CD8-positive, alpha-beta T cell (primary cell): ENCODE measurements at regions of chr16 and their contacts with region 1.

Region 1: DNA sequence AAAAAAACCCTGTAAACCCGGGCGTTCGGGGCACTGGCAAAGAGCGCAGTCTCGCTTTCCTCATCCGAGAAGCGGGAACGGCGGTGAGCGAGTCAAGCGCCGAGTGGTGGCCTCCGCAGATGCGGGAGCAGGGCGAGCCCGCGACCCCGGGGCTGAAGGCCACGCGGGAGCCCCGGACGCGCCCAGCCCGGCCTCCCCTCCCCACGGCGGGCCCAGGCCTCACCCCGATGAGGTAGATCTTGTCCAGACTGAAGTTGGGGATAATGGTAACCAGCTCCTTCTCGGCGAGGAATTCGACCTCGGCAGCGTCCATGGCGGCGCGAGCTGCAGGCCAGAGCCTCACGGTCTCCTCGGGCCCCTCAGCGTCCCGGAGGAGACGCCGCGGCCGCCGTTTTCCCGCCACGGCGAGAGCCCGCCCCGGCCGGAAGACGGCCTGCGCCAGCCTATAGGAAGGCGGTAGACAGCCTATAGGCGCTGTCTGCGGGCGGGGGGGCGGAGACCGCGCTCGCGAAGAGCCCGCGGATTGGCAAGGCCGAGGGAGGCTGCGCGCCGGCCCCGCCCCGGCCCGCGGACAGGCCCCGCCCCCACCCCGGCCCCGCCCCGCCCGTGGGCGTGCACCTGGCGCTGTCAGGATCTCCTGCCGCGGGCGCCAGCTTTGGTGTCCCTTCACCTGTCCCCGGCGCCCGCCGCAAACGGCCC is at the start of gene GINS2:
- DNase-seq: peak; percentile 84 to 95 (median 89)
- ATAC-seq: peak; percentile 100
- H3K4me3 ChIP-seq: peak within 1 kb of the TSS; percentile 51 to 88
- H3K4me3 Mint-ChIP-seq: peak within 1 kb of the TSS; percentile 75
- H3K27ac ChIP-seq: no peak within 1 kb of the TSS
- H3K27ac Mint-ChIP-seq: no peak within 1 kb of the TSS
- H3K4me1 ChIP-seq: peaks cover 7% of the 10 kb centered on the region
- H3K4me1 Mint-ChIP-seq: peaks cover 2% of the 10 kb centered on the region
- H3K27me3 ChIP-seq: no peaks in the 10 kb centered on the region
- H3K27me3 Mint-ChIP-seq: peaks cover 5% of the 10 kb centered on the region
- CTCF ChIP-seq: no peak
- total RNA-seq, gene GINS2: 0.58 to 1.0 TPM

Region 2: DNA sequence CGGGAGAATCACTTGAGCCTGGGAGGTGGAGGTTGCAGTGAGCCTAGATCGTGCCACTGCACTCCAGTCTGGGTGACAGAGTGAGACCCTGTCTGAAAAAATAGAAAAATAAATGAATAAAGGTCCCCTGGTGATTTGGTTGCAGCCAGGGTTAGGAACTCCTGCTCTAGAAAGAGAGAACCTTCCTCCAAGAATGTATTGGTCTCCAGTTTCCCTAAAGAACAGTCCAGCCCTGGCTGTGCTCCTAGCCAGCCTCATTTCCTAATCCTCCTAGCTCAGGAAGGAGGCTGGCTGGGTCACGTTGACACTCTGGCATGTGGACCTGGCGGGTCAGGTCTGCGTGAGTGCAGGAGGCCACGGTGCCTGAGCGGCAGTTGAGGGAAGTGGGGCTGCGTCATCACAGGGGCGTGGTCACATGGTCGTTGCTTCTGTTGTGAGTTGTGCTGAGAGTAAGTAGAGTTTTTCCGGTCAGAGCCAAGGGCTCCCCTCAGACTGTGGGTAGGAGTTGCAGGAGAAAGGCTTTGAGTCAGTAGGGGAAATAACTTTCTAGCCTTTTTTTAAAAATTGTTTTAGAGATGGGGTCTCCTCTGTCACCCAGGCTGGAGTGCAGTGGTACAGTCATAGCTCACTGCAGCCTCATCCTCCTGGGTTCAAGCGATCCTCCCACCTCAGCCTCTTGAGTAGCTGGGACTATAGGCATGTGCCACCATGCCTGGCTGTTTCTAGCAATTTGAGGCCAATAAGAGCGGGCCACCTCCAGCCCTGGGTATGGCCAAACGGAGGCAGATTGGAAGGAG is 382.5 kb before region 1 on chr16:
- CTCF ChIA-PET with region 1: no interaction called
- POLR2A ChIA-PET with region 1: no interaction called
- intact Hi-C with region 1: no loop called
- DNase-seq: peak; percentile 54 to 89 (median 82)
- ATAC-seq: peak; percentile 87
- H3K4me3 ChIP-seq: no peak overlapping the region
- H3K4me3 Mint-ChIP-seq: peak overlapping the region; percentile 44
- H3K27ac ChIP-seq: peak overlapping the region in 1 of 2 experiments; percentile 31
- H3K27ac Mint-ChIP-seq: peak overlapping the region; percentile 95
- H3K4me1 ChIP-seq: peaks cover 80% of the 10 kb centered on the region
- H3K4me1 Mint-ChIP-seq: peaks cover 58% of the 10 kb centered on the region
- H3K27me3 ChIP-seq: peaks cover 0 to 6% of the 10 kb centered on the region in 2 experiments
- H3K27me3 Mint-ChIP-seq: no peaks in the 10 kb centered on the region
- CTCF ChIP-seq: no peak

Region 3: GRCh38 chr16:85607321-85607765 is 81.4 kb before region 1 on chr16:
- CTCF ChIA-PET with region 1: no interaction called
- POLR2A ChIA-PET with region 1: no interaction called
- intact Hi-C with region 1: no loop called
- DNase-seq: no peak
- ATAC-seq: no peak
- H3K4me3 ChIP-seq: no peak overlapping the region
- H3K4me3 Mint-ChIP-seq: peak overlapping the region; percentile 29
- H3K27ac ChIP-seq: no peak overlapping the region
- H3K27ac Mint-ChIP-seq: no peak overlapping the region
- H3K4me1 ChIP-seq: peaks cover 29% of the 10 kb centered on the region
- H3K4me1 Mint-ChIP-seq: peaks cover 38% of the 10 kb centered on the region
- H3K27me3 ChIP-seq: no peaks in the 10 kb centered on the region
- H3K27me3 Mint-ChIP-seq: no peaks in the 10 kb centered on the region
- CTCF ChIP-seq: no peak

Region 4: GRCh38 chr16:85785927-85786326 is 97.2 kb after region 1 on chr16:
- CTCF ChIA-PET with region 1: no interaction called
- POLR2A ChIA-PET with region 1: no interaction called
- intact Hi-C with region 1: no loop called
- DNase-seq: no peak
- ATAC-seq: no peak
- H3K4me3 ChIP-seq: no peak overlapping the region
- H3K4me3 Mint-ChIP-seq: no peak overlapping the region
- H3K27ac ChIP-seq: no peak overlapping the region
- H3K27ac Mint-ChIP-seq: no peak overlapping the region
- H3K4me1 ChIP-seq: peaks cover 22% of the 10 kb centered on the region
- H3K4me1 Mint-ChIP-seq: peaks cover 26% of the 10 kb centered on the region
- H3K27me3 ChIP-seq: no peaks in the 10 kb centered on the region
- H3K27me3 Mint-ChIP-seq: no peaks in the 10 kb centered on the region
- CTCF ChIP-seq: no peak

Region 5: GRCh38 chr16:85799497-85800337 is 111.0 kb after region 1 on chr16 and contains the starts of genes COX4I1 and EMC8:
- CTCF ChIA-PET with region 1: no interaction called
- POLR2A ChIA-PET with region 1: no interaction called
- intact Hi-C with region 1: loop called in 1 of 2 experiments (anchors 5 kb)
- DNase-seq: peak; percentile 84 to 96 (median 93)
- ATAC-seq: peak; percentile 76
- H3K4me3 ChIP-seq: peak within 1 kb of the TSS; percentile 83 to 87
- H3K4me3 Mint-ChIP-seq: peak within 1 kb of the TSS; percentile 89
- H3K27ac ChIP-seq: peak within 1 kb of the TSS; percentile 77 to 92
- H3K27ac Mint-ChIP-seq: peak within 1 kb of the TSS; percentile 97
- H3K4me1 ChIP-seq: peaks cover 33% of the 10 kb centered on the region
- H3K4me1 Mint-ChIP-seq: peaks cover 69% of the 10 kb centered on the region
- H3K27me3 ChIP-seq: no peaks in the 10 kb centered on the region
- H3K27me3 Mint-ChIP-seq: no peaks in the 10 kb centered on the region
- CTCF ChIP-seq: no peak
- total RNA-seq, gene COX4I1: 876 to 878 TPM
- total RNA-seq, gene EMC8: 56.0 to 56.2 TPM